ENCODE measurements at regions of chr2 and their contacts with region 1.

Region 1: GRCh38 chr2:17540093-17540812 is at the start of gene VSNL1:
- DNase-seq: peak; percentile 63 to 88
- ATAC-seq: peak; percentile 64 to 81 (median 70)
- H3K4me3 ChIP-seq: peak within 1 kb of the TSS; percentile 68
- H3K27ac ChIP-seq: peak within 1 kb of the TSS; percentile 66
- H3K4me1 ChIP-seq: no peaks in the 10 kb centered on the region
- H3K27me3 ChIP-seq: peaks cover 0 to 7% (median 7%) of the 10 kb centered on the region in 3 donors
- CTCF ChIP-seq: no peak
- total RNA-seq, gene VSNL1: 0.12 to 0.27 TPM in 2 of 4 donors, not detected in the others

Region 2: GRCh38 chr2:17506736-17507616 is 33.3 kb before region 1 on chr2:
- intact Hi-C with region 1: loop called in 1 of 2 experiments (anchors 5 kb)
- DNase-seq: no peak
- ATAC-seq: no peak
- H3K4me3 ChIP-seq: no peak overlapping the region
- H3K27ac ChIP-seq: no peak overlapping the region
- H3K4me1 ChIP-seq: no peaks in the 10 kb centered on the region
- H3K27me3 ChIP-seq: peaks cover 0 to 2% (median 0%) of the 10 kb centered on the region in 3 donors
- CTCF ChIP-seq: no peak